ENCODE measurements at regions of chr22 and their contacts with region 1.

Region 1: GRCh38 chr22:41857155-41857859 is 24.4 kb downstream of the SREBF2 start:
- H3K4me3 ChIP-seq: no peak overlapping the region
- H3K27ac ChIP-seq: no peak overlapping the region
- H3K4me1 ChIP-seq: peaks cover 10% of the 10 kb centered on the region
- CTCF ChIP-seq: no peak

Region 2: DNA sequence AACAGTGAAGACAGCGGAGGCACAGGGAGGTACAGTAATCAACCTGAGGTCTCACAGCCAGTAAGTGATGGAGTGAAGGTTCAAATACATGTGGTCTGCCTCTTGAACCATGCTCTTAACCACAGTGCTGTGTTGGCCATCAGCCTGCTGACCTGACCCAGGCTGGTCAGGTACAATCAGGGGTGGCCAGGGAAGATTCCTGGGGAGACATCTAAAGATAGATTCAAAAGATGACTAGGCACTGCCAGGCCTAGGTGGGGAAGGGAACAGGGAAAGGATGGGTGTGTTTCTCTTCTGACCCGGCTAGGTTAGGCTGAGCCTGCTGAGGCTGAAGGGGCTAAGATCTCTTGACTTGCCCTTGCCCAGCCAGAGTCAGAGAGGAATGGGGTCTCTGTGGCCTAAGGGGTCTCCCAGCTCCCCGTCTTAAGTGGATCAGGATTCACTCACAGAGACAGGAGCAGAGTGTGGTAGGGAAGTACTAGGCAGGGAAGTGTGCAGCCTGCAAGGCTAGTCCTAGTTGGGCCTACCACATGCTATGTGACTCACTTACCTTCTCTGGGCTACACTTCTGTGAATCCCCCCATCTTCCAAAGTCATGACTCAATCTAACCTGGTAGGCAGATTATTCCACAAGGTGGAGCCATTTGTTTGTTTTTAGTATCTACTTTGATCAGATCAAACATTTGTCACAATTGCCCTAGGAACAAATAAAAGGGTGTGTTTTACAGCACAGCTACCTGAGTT is 34.8 kb before region 1 on chr22:
- CTCF ChIA-PET with region 1: interaction called, 11 read pairs
- POLR2A ChIA-PET with region 1: no interaction called
- H3K4me3 ChIP-seq: no peak overlapping the region
- H3K27ac ChIP-seq: no peak overlapping the region
- H3K4me1 ChIP-seq: no peaks in the 10 kb centered on the region
- CTCF ChIP-seq: peak; percentile 55; the same call in 1 of the 2 replicates

Region 3: DNA sequence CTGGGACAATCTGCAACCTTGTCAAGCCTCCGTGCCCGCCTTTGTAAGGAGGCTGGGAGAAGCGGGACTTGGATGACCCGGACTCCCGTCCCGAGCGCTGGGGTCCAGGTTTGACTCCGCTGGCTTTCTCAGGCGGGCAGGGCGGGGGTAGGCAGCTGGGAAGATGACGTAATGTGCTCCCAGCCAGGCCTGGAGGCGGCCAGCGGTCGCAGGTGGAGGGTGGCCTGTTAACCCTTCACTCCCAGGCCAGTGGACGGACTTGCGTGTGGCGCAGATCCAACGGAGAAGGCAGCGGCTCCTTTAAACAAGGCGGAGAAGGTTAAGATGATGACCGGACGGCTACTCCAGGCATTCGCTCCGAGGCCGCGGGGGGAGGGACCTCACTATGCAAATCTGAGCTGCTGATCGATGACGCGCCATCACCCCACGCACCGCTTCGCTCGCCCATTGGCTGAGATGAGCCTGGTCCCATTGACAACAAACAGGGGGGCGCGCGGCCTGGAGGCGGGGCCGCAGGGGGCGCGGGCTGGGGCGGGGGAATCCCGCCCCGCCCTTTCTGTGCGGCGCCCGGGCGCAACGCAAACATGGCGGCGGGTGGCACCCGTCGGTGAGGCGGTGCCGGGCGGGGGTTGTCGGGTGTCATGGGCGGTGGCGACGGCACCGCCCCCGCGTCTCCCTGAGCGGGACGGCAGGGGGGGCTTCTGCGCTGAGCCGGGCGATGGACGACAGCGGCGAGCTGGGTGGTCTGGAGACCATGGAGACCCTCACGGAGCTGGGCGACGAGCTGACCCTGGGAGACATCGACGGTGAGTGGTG is 24.5 kb before region 1 on chr22 and contains the start of gene SREBF2:
- CTCF ChIA-PET with region 1: interaction called, 10 read pairs
- POLR2A ChIA-PET with region 1: interaction called, 7 read pairs
- H3K4me3 ChIP-seq: peak within 1 kb of the TSS; percentile 96
- H3K27ac ChIP-seq: peak within 1 kb of the TSS; percentile 87
- H3K4me1 ChIP-seq: peaks cover 3% of the 10 kb centered on the region; the same call in 1 of the 2 replicates
- CTCF ChIP-seq: peak; percentile 69

Region 4: DNA sequence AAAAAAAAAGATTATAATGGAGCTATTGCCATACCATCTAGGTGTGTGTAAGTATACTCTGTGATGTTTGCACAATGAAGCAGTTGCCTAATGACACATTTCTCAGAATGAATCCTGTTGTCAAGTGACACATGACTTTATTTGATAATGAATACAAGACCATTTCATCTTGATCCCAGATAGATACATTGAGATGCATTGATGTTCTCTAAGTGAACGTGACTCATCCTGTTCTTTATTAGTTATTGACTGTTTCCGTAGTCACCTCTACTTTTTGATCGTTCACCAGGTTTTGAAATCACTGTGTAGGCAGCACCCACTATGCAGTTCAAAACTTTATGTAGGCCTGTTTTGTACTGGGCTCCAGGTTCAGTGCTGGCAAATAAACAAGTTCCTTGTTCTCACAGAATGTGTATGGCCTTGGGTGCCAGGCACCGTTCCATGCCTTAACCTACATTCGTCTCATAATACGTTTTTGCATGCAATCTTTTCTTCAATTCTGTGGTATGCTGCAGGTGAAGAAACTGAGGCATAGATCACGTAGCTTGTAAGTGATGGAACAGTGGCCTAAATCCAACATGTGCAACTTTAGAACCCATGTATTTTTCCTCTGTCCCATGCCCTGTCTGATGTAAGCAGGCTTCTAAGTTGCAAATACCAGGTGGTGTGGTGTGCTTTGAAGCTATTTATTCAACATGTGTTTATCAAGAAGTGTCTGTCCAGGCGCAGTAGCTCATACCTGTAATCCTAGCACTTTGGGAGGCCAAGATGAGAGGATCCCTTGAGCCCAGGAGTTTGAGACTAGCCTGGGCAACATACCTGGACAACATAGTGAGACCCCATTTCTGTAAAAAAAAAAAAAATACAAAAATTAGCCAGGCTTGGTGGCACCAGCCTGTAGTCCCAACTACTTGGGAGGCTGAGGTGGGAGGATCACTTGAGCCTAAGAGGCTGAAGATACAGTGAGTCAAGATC is 14.0 kb before region 1 on chr22:
- CTCF ChIA-PET with region 1: interaction called, 35 read pairs
- POLR2A ChIA-PET with region 1: interaction called, 3 read pairs
- H3K4me3 ChIP-seq: no peak overlapping the region
- H3K27ac ChIP-seq: no peak overlapping the region
- H3K4me1 ChIP-seq: peaks cover 23% of the 10 kb centered on the region
- CTCF ChIP-seq: no peak

Region 5: DNA sequence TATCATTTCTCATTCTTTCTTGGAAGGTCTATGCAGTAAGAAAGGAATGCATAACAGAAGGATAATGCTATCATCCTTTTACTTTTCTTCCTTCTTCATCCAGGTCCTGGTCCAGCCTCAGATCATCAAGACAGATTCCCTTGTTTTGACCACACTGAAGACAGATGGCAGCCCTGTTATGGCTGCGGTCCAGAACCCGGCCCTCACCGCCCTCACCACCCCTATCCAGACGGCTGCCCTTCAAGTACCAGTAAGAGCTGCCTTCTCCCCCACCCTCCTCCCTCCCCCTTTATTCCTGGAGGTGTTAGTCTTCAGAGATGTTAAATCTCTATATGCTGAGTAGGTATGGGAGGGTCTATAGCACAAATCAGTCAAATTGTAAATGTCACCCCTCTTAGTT is 13.5 kb after region 1 on chr22:
- CTCF ChIA-PET with region 1: interaction called, 16 read pairs
- POLR2A ChIA-PET with region 1: interaction called, 5 read pairs
- H3K4me3 ChIP-seq: no peak overlapping the region
- H3K27ac ChIP-seq: no peak overlapping the region
- H3K4me1 ChIP-seq: no peaks in the 10 kb centered on the region
- CTCF ChIP-seq: no peak

Region 6: DNA sequence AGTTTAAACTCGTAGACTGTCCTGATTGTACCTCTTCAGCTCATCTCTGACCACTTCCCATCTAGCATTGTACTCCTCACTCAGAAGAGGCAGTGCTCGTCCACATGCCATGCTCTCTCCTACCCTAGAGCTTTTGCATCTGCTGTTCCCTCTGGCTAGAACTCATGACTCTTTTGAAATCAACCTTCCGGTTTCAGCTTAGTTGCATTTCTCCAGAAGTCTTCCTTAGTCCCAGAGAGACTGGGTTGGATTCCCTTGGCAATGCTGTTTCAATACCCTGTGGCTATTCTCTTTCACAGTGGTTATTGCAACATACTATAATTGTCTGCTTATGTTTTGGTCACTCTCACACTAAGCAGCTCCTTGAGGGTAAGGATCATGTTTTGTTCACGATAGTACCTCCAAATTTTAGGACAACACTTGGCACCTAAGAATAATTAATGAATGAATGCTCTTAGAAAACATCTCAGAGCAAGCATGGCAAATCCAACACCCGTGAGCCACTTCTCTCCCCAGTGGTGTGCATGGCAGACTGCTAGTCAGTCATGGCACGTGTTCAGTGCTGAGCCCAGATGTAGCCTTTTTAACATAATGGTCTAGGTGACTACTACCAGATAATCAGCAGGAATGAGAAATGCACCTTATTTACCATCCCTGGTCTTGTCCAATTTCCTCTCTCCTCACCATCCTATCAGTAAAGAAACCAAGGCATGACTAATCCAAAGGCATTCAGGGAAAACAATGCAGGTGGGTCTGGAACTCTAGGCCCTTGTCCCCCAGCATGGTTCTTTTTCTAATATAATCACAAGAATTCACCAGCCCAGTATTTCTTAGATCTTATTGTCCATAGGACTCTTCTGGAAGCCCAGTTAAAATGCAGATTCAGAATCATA is 126.5 kb after region 1 on chr22:
- CTCF ChIA-PET with region 1: no interaction called
- POLR2A ChIA-PET with region 1: no interaction called
- H3K4me3 ChIP-seq: no peak overlapping the region
- H3K27ac ChIP-seq: no peak overlapping the region
- H3K4me1 ChIP-seq: no peaks in the 10 kb centered on the region
- CTCF ChIP-seq: no peak